ENCODE measurements at regions of chr6 and their contacts with region 1.

Region 1: GRCh38 chr6:15389765-15390723 is 144.2 kb downstream of the JARID2 start:
- DNase-seq: peak; percentile 52 to 77 (median 72)
- H3K4me3 ChIP-seq: peak overlapping the region in 1 of 7 experiments; percentile 40
- H3K27ac ChIP-seq: peak overlapping the region in 1 of 2 experiments; percentile 7
- H3K4me1 ChIP-seq: peaks cover 13 to 66% (median 55%) of the 10 kb centered on the region in 4 experiments
- H3K27me3 ChIP-seq: no peaks in the 10 kb centered on the region

Region 2: DNA sequence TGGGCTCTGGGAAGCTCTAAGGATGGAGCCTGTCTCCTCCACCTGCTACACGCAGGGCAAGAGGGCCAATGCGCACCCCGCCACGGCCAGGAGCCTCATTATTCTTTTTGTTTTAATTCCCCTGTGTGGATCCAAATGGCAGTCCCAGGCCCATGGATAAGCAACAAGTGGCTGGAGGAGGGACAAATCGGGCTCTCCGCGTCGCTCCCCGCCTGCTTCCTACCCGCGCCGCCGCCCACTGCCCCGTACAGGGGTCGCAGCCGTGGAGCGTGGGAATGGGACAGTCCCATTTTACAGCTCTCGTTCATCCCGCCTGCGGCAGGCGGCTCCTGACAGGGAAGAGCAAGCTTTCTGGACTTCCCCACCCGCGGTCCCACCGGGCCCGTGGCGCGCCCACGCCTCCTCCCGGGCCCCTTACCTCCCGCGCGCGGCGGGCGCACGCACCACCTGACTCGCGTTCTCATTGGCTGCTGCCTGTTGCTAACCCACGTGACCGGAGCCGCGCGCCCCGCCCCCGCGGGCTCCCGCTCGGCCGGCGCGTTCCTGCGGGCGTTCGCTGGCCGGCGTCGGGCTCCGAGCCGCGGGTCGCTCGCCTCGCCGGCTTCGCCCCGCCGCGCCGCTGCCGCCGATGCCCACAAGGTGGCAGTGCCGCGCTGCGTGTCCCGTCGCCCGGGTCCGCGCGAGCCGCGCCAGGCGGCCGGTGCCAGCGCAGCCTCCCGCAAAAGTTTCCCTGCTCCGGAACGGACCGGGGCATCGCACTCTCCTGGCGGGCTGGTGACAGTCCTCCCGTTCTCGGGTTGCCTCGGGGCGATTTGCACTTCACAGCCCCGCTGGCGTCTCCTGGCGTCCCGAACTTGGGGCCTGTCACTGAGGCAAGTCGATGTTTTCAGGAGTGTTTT is 1179.1 kb before region 1 on chr6:
- CTCF ChIA-PET with region 1: interaction called, 12 read pairs
- POLR2A ChIA-PET with region 1: no interaction called
- DNase-seq: peak; percentile 92 to 96 (median 95)
- H3K4me3 ChIP-seq: peak overlapping the region; percentile 62 to 79 (median 75)
- H3K27ac ChIP-seq: peak overlapping the region; percentile 53 to 82
- H3K4me1 ChIP-seq: peaks cover 8 to 32% (median 25%) of the 10 kb centered on the region in 4 experiments
- H3K27me3 ChIP-seq: no peaks in the 10 kb centered on the region

Region 3: GRCh38 chr6:15327271-15327670 is 62.8 kb before region 1 on chr6:
- CTCF ChIA-PET with region 1: interaction called, 20 read pairs
- POLR2A ChIA-PET with region 1: no interaction called
- DNase-seq: peak; percentile 60 to 80 (median 71)
- H3K4me3 ChIP-seq: peak overlapping the region in 1 of 7 experiments; percentile 18
- H3K27ac ChIP-seq: peak overlapping the region in 1 of 2 experiments; percentile 15
- H3K4me1 ChIP-seq: peaks cover 37 to 92% (median 76%) of the 10 kb centered on the region in 4 experiments
- H3K27me3 ChIP-seq: no peaks in the 10 kb centered on the region

Region 4: DNA sequence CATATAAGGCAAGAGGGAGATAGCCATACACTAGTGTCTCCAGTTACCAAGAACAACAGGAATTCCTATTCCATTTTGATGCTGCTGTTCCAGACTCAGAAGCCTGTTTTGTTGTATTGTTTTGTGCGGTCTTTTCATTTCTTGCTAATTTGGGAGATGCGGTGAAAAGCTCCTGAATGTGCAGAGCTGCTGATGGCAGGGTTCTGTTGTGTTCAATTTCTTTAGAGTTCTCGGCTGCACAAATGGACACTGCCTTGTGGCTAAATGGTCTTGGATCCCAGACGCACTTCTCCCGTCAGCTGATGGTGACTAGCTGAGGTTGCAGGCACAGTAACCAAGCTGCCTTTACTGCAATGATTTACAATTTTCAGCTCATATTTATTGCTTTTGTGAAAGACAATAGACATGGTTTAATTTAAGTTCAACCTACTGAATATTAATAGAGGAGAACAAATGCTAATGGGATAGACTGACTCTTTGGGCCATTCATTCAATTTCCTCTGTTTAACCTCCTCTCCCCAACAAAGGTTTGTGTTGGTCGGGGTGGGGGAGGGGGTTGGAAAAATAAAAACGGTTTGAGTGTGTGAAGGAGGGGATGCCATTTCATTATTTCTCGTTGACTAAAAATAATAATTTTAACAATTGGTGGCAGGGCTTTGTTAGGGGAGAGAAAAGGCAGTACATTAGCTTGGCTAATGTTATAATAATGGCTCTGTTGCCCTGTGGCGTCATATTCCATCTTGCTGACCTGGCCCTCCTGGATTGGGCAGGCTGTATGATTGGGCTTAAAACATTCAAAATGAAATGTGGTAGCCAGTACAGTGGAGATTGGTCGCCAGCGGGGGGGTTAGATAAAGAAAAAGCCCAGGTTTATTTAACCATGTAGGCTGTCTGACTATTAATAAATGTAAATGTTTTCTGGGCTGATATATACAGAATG is 15.4 kb after region 1 on chr6:
- CTCF ChIA-PET with region 1: interaction called, 10 read pairs
- POLR2A ChIA-PET with region 1: no interaction called
- DNase-seq: no peak
- H3K4me3 ChIP-seq: peak overlapping the region in 1 of 7 experiments; percentile 75
- H3K27ac ChIP-seq: no peak overlapping the region
- H3K4me1 ChIP-seq: peaks cover 44 to 100% (median 94%) of the 10 kb centered on the region in 4 experiments
- H3K27me3 ChIP-seq: no peaks in the 10 kb centered on the region

Region 5: DNA sequence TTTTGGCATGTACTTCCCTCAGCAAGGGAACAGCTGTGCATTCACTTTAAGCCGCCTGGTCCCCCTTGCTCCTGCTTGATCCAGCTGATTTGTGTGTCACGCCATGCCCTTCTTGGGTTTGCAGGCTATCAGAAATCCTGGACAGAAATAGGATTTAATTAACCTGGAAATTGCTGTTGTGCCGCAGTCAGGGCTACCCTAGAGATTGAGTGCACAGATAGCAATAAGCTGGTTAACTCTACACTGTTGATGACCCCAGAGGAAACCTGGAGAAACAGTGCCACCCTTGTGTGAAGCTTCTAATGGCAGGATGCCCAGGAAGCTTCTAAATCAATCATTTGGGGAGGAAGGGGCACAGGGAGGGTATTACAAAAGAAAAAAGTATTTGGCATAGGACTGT is 54.8 kb after region 1 on chr6:
- CTCF ChIA-PET with region 1: interaction called, 11 read pairs
- POLR2A ChIA-PET with region 1: no interaction called
- DNase-seq: peak; percentile 67 to 75 (median 75)
- H3K4me3 ChIP-seq: peak overlapping the region in 2 of 7 experiments; percentile 1 to 37
- H3K27ac ChIP-seq: no peak overlapping the region
- H3K4me1 ChIP-seq: peaks cover 22 to 85% (median 63%) of the 10 kb centered on the region in 4 experiments
- H3K27me3 ChIP-seq: no peaks in the 10 kb centered on the region